A549 (cell line): ENCODE measurements at regions of chr7 and their contacts with region 1.

Region 1: DNA sequence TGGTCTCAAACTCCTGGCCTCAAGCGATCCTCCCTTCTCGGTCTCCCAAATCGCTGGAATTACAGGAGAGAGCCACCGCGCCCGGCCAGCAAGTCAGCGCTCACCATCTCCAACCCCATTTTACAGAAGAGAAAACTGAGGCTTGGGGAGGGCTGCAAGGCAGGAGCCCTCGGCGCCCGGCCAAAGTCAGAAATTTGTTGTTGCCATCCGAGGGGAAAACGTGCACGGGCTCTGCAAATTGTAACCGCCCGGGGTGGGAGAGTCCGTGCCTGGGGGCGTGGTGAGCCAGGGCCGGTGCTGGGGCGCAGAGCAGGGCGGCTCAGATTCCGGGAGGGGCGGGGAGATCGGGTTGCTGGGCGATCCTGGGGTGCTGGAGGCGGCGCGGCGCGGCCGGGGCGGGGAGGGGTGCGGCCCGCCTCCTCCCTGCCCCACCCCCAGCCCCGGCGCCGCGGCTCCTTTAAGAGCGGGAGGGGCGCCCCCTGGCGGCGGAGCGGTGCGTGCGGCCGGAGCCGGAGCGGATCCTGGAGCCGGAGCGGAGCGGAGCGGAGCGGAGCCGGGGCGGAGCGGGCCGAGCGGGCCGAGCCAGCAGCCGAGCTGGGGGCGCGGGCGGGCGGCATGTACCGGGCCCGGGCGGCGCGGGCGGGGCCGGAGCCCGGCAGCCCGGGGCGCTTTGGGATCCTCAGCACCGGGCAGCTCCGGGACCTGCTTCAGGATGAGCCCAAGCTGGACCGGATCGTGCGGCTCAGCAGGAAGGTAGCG is at the start of gene VPS37D:
- DNase-seq: peak; percentile 85 to 89
- ATAC-seq: peak; percentile 82 to 91
- H3K4me3 ChIP-seq: peak within 1 kb of the TSS; percentile 90
- H3K27ac ChIP-seq: peak within 1 kb of the TSS; percentile 95
- H3K4me1 ChIP-seq: peaks cover 18% of the 10 kb centered on the region; the same call in 2 of the 3 replicates
- CTCF ChIP-seq: peak; percentile 97
- EP300 ChIP-seq: no peak
- POLR2A ChIP-seq: no peak
- RAD21 ChIP-seq: peak; percentile 71 to 94
- polyA plus RNA-seq, gene VPS37D: 3.3 and 3.8 TPM in 2 replicates

Region 2: DNA sequence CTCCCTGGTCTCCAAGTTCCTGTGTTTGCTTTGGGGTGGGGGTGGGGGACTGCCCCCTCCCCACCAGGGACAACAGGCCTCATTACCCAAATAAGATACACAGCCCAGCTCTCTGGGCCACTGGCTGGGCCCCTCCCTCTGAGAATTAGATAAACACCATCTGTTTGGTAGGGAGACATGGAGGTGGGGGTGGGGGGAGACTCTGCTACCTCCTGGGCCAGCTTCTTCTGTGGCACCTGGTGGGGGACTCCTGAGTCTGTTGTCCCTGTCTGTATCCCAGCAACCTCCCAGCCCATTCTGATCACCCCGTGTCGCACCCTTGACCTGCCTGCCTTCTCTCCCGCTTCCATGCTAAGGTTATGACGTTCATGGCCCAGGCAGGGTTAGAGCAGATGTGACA is 49.0 kb before region 1 on chr7:
- CTCF ChIA-PET with region 1: interaction called, 54 read pairs
- POLR2A ChIA-PET with region 1: no interaction called
- DNase-seq: no peak
- ATAC-seq: no peak
- H3K4me3 ChIP-seq: no peak overlapping the region
- H3K27ac ChIP-seq: 0 out of 6 replicates have a peak overlapping the region, but pooled peaks of 1 of the 2 experiments have one; percentile 11
- H3K4me1 ChIP-seq: peaks cover 29% of the 10 kb centered on the region
- CTCF ChIP-seq: no peak
- EP300 ChIP-seq: no peak
- POLR2A ChIP-seq: no peak
- RAD21 ChIP-seq: no peak

Region 3: DNA sequence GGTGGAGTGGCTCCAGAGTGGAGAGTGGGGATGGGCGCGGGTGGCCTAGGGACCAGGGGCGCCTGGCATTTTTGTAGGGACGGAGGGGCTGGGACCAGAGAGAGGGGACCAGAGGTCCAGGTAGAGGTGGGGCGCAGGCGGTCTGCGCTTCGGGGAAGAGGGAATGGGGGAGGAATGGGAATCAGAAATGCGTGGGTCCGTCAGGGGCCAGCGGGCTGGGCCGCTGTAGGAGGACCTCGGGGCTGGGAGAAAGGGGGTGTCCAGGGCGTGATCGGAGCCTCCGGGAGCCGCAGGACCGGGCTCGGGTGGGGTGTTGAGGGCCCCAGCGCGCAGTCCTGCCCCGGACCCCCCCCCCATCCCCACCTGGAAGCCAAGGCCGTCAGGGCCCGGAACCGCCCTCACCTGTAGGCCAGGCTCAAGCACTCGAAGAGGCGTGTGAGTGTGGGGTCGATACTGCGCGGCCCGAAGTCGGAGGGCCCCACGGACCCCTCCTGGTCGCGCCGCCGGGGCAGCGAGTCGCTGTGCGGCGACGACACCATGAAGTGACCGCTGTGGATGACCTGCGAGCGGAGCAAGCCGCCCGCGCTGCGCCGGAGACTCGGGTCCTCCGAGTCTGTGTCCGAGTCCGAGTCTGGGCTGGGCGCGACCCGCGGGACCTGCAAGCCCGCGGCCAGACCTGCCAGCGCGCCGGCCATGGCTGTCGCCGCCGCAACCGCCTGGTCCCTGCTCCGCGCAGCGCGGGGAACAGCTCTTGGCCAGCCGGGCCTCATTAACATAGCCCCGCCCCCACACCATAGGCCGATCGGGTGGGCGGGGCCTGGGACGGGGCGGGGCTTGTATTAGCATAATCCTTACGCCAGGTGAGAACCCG is 43.5 kb before region 1 on chr7 and contains the start of gene MLXIPL:
- CTCF ChIA-PET with region 1: interaction called, 73 read pairs
- POLR2A ChIA-PET with region 1: interaction called, 3 read pairs
- DNase-seq: peak; percentile 78 to 97
- ATAC-seq: peak; percentile 84 to 90
- H3K4me3 ChIP-seq: peak within 1 kb of the TSS; percentile 55
- H3K27ac ChIP-seq: peak within 1 kb of the TSS; percentile 71 to 92
- H3K4me1 ChIP-seq: peaks cover 25% of the 10 kb centered on the region
- CTCF ChIP-seq: no peak
- EP300 ChIP-seq: no peak
- POLR2A ChIP-seq: peak; percentile 48; the same call in 1 of the 2 replicates
- RAD21 ChIP-seq: no peak
- polyA plus RNA-seq, gene MLXIPL: 1.4 and 2.2 TPM in 2 replicates

Region 4: DNA sequence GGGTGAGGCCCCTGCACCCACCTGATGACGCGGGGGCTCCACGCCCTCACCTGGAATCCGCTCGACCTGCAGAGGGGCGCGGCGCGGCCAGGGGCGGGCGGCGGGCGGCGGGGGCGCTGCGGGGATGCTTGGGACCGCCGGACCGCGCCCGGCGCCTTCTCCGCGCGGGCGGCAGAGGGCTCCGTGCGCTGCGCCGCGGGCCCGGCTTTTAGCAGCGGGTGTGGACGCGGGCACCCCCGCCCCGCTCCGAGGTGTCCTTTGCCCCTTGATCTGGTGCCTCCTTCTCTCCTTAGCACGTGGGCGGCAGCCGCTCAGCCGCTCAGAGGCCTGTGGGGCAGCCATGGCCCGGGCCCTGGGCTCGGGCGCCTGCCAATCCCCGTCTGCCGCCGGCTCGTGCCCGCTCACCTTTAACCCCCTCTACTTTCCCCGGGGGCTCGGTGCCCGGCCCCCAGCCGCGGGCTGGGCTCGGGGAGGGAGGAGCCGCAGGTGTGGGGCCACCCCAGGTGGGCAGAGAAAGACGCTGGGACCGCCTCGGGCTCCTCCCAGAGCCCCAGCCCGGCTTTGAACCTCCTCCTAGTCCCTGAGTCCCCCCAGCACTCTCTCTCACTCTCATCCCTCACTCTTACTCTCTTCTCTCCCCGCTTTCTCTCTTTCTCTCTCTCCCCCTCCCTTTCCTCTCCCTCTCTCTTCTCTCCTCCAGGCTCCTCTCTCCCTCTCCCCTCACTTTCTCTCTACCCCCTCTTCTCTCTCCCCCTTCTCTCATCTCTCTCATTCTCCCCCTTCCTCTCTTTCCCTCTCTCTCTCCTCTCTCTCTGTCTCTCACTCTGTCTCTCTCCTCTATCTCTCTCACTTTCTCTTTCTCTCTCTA is 19.6 kb before region 1 on chr7:
- CTCF ChIA-PET with region 1: interaction called, 14 read pairs
- POLR2A ChIA-PET with region 1: no interaction called
- DNase-seq: peak in 1 of 2 experiments; percentile 43
- ATAC-seq: peak; percentile 81 to 84
- H3K4me3 ChIP-seq: peak overlapping the region; percentile 68
- H3K27ac ChIP-seq: peak overlapping the region; percentile 91 to 95
- H3K4me1 ChIP-seq: peaks cover 13% of the 10 kb centered on the region; the same call in 2 of the 3 replicates
- CTCF ChIP-seq: peak; percentile 50
- EP300 ChIP-seq: no peak
- POLR2A ChIP-seq: no peak
- RAD21 ChIP-seq: peak in 1 of 2 experiments; percentile 49; a peak in 1 of 5 replicates

Region 5: GRCh38 chr7:73718905-73719805 is 51.6 kb after region 1 on chr7 and contains the start of gene STX1A:
- CTCF ChIA-PET with region 1: interaction called, 86 read pairs
- POLR2A ChIA-PET with region 1: no interaction called
- DNase-seq: peak in 1 of 2 experiments; percentile 66
- ATAC-seq: peak; percentile 17 to 32; a peak in 5 of 6 replicates
- H3K4me3 ChIP-seq: peak within 1 kb of the TSS; percentile 100
- H3K27ac ChIP-seq: peak within 1 kb of the TSS; percentile 99 to 100
- H3K4me1 ChIP-seq: peaks cover 65% of the 10 kb centered on the region
- CTCF ChIP-seq: no peak
- EP300 ChIP-seq: no peak
- POLR2A ChIP-seq: peak; percentile 63
- RAD21 ChIP-seq: no peak
- polyA plus RNA-seq, gene STX1A: 72.9 and 81.7 TPM in 2 replicates